ENCODE measurements at regions of chr5 and their contacts with region 1.

Region 1: DNA sequence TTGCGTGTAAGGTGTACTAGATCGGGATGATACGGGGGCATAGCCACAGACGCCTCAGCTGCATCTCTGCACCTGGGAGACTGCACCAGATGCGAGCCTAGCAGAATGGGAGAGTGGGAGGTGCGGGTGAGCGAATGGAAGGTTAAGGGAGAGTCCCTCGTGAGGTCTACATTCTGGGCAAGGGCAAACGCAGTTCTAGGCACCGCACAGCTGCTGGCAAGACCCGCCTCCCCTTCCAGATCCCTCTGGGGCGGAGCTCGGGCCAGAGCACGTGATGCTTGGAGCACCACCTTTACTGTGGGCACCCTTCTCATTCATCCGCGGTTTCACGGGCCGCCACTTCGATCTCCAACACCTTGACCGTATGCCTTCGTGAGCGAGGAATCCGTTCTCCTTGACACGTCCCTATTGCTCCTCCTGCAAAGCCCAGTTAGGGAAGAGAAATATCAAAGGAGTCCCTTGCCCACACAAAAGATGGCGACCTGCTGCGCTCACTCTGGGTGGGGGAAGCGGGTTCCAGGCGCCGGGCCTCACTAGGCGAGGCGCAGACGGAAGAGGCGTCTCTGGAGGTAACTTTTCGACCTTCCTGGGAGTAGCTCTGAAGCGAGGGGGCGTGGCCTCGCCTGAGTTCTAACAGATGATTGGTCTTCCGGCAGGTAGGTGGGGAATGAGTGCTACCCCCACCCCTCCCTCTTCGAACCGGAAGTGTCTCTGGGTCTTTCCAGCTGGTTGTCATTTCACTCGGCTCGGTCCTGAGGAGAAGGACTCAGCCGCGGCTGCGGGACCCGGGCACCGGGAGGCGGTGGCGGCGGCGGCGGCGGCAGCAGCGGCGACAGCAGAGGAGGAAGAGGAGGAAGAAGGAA is at the start of gene CPEB4:
- DNase-seq: peak; percentile 98
- ATAC-seq: peak; percentile 96
- H3K4me3 Mint-ChIP-seq: peak within 1 kb of the TSS; percentile 96
- H3K27ac Mint-ChIP-seq: peak within 1 kb of the TSS; percentile 98
- H3K4me1 Mint-ChIP-seq: peaks cover 67% of the 10 kb centered on the region
- H3K27me3 Mint-ChIP-seq: no peaks in the 10 kb centered on the region
- total RNA-seq, gene CPEB4: 5.6 to 8.3 TPM

Region 2: GRCh38 chr5:173781814-173782670 is 105.8 kb before region 1 on chr5:
- CTCF ChIA-PET with region 1: interaction called, 3 read pairs
- POLR2A ChIA-PET with region 1: no interaction called
- intact Hi-C with region 1: loop called in 1 of 2 experiments (anchors 2 kb)
- DNase-seq: peak; percentile 74
- ATAC-seq: peak; percentile 70
- H3K4me3 Mint-ChIP-seq: peak overlapping the region; percentile 22
- H3K27ac Mint-ChIP-seq: peak overlapping the region; percentile 89
- H3K4me1 Mint-ChIP-seq: peaks cover 29% of the 10 kb centered on the region
- H3K27me3 Mint-ChIP-seq: no peaks in the 10 kb centered on the region

Region 3: GRCh38 chr5:173917788-173918786 is 30.2 kb after region 1 on chr5:
- CTCF ChIA-PET with region 1: interaction called, 7 read pairs
- POLR2A ChIA-PET with region 1: interaction called, 6 read pairs
- intact Hi-C with region 1: loop called (anchors 1 kb)
- DNase-seq: peak; percentile 73
- ATAC-seq: peak; percentile 96
- H3K4me3 Mint-ChIP-seq: no peak overlapping the region
- H3K27ac Mint-ChIP-seq: no peak overlapping the region
- H3K4me1 Mint-ChIP-seq: peaks cover 10% of the 10 kb centered on the region
- H3K27me3 Mint-ChIP-seq: no peaks in the 10 kb centered on the region

Region 4: DNA sequence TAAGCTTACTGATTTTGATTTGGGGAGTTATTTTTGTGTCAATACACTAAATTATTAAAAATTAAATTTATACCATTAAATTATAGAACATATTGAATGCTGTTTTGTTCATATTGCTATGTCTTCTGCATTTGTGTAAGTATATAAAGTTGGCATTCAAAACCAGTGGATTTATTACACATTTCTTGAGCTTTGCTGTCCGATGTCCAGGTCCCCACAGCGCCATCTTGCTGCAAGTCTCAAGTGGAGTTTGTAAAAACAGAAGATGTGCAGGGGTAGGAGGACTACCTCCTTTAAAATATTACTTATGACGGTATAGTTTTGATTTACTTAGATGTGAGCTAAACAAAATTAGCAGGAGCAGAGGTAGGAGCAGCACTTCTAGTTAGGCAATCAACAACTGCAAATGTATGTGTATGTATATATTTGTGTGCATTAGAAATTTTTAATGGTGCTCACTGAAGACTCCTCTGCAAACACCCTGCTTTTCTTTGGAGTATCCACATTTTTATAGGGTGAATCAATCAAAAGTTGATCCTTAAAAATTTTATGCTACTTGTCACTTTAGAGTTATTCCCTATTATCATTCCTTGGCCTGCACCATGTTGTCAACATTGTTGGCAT is 37.7 kb after region 1 on chr5:
- CTCF ChIA-PET with region 1: interaction called, 10 read pairs
- POLR2A ChIA-PET with region 1: no interaction called
- intact Hi-C with region 1: no loop called
- DNase-seq: peak; percentile 69
- ATAC-seq: no peak
- H3K4me3 Mint-ChIP-seq: no peak overlapping the region
- H3K27ac Mint-ChIP-seq: no peak overlapping the region
- H3K4me1 Mint-ChIP-seq: peaks cover 26% of the 10 kb centered on the region
- H3K27me3 Mint-ChIP-seq: no peaks in the 10 kb centered on the region

Region 5: DNA sequence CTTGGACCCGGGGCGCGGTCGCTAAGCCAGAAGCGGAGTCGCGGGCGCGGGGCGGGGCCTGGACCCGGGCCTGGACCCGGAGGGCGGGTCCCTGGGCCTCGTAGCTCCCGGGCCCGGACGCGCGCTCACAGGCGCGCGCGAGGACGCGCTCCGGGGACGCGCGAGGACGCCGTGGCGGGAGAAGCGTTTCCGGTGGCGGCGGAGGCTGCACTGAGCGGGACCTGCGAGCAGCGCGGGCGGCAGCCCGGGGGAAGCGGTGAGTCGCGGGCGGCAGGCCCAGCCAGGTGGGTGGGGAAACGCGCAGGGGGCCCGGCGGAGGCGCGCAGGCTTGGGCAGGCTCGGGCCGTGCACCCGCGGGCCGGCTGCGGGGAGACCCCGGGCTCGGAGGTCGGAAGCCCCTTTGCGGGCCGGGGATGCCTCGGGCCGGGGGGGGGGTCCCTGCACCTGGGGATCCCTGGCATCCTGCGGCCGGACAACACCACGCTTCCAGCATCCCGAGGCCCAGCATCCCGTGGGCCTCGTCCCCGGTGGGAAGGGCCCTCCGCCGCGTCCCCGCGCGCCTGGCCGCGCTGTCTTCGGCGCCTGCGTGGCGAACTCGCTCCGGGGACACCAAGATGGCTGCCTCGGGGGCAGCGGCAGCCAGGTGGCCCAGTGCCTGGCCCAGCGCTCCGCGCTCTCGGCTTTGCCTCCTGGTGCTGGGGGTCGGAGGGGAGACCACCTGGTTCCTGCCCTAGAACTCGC is 1590.7 kb after region 1 on chr5 and contains the start of gene SFXN1:
- CTCF ChIA-PET with region 1: no interaction called
- POLR2A ChIA-PET with region 1: no interaction called
- intact Hi-C with region 1: loop called in 1 of 2 experiments (anchors 10 kb)
- DNase-seq: peak; percentile 90
- ATAC-seq: peak; percentile 79
- H3K4me3 Mint-ChIP-seq: peak within 1 kb of the TSS; percentile 97
- H3K27ac Mint-ChIP-seq: peak within 1 kb of the TSS; percentile 99
- H3K4me1 Mint-ChIP-seq: peaks cover 47% of the 10 kb centered on the region
- H3K27me3 Mint-ChIP-seq: peaks cover 3% of the 10 kb centered on the region
- total RNA-seq, gene SFXN1: 322 to 433 TPM